Sigmoid colon (tissue), 7 donors: ENCODE measurements at regions of chr2 and their contacts with region 1.

Region 1: GRCh38 chr2:37231241-37232130 is at the starts of genes CEBPZ and NDUFAF7:
- DNase-seq: peak; percentile 96
- H3K4me3 ChIP-seq: peak within 1 kb of the TSS; percentile 69 to 96 (median 82)
- H3K27ac ChIP-seq: peak within 1 kb of the TSS; percentile 93 to 98 (median 95)
- H3K4me1 ChIP-seq: peaks cover 0 to 62% (median 52%) of the 10 kb centered on the region in 4 donors
- H3K27me3 ChIP-seq: no peaks in the 10 kb centered on the region
- CTCF ChIP-seq: no peak
- EP300 ChIP-seq: peak in 1 of 4 donors; percentile 17
- POLR2A ChIP-seq: peak; percentile 81 to 91
- total RNA-seq, gene CEBPZ: 38.8 to 54.2 (median 42.8) TPM
- total RNA-seq, gene NDUFAF7: 26.7 to 35.0 (median 28.3) TPM

Region 2: DNA sequence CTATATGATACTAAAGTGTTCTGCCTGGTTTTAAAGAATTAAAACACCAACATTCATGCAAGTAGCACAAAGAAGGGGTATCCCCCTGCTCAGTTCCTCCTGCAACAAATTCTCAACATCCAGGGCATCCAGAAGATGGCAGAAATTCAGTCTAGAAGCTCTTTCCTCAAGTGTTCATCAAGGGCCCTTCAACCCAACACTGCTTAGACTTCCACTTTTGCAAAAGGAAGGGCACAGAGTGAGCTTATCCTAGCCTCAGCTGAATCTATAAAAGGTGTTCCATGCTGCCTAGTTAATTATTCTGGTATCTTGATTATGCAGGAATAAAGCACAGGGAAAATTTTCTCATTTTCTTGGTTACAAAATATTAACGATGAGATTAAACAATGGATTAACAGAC is 1151.7 kb before region 1 on chr2:
- intact Hi-C with region 1: no loop called
- DNase-seq: no peak
- H3K4me3 ChIP-seq: no peak overlapping the region
- H3K27ac ChIP-seq: no peak overlapping the region
- H3K4me1 ChIP-seq: no peaks in the 10 kb centered on the region
- H3K27me3 ChIP-seq: no peaks in the 10 kb centered on the region
- CTCF ChIP-seq: no peak
- EP300 ChIP-seq: no peak
- POLR2A ChIP-seq: no peak

Region 3: GRCh38 chr2:37083873-37084794 is 147.4 kb before region 1 on chr2 and contains the starts of genes GPATCH11 and HEATR5B:
- intact Hi-C with region 1: loop called (anchors 10 kb)
- DNase-seq: peak; percentile 97
- H3K4me3 ChIP-seq: peak within 1 kb of the TSS; percentile 68 to 92 (median 84)
- H3K27ac ChIP-seq: peak within 1 kb of the TSS; percentile 80 to 83 (median 82)
- H3K4me1 ChIP-seq: peaks cover 0 to 25% (median 20%) of the 10 kb centered on the region in 4 donors
- H3K27me3 ChIP-seq: no peaks in the 10 kb centered on the region
- CTCF ChIP-seq: no peak
- EP300 ChIP-seq: no peak
- POLR2A ChIP-seq: peak in 1 of 2 donors; percentile 52
- total RNA-seq, gene GPATCH11: 4.7 to 11.8 (median 7.8) TPM
- total RNA-seq, gene HEATR5B: 16.6 to 24.7 (median 22.2) TPM

Region 4: GRCh38 chr2:37142546-37142945 is 88.9 kb before region 1 on chr2:
- intact Hi-C with region 1: no loop called
- DNase-seq: no peak
- H3K4me3 ChIP-seq: no peak overlapping the region
- H3K27ac ChIP-seq: no peak overlapping the region
- H3K4me1 ChIP-seq: no peaks in the 10 kb centered on the region
- H3K27me3 ChIP-seq: no peaks in the 10 kb centered on the region
- CTCF ChIP-seq: no peak
- EP300 ChIP-seq: no peak
- POLR2A ChIP-seq: no peak

Region 5: DNA sequence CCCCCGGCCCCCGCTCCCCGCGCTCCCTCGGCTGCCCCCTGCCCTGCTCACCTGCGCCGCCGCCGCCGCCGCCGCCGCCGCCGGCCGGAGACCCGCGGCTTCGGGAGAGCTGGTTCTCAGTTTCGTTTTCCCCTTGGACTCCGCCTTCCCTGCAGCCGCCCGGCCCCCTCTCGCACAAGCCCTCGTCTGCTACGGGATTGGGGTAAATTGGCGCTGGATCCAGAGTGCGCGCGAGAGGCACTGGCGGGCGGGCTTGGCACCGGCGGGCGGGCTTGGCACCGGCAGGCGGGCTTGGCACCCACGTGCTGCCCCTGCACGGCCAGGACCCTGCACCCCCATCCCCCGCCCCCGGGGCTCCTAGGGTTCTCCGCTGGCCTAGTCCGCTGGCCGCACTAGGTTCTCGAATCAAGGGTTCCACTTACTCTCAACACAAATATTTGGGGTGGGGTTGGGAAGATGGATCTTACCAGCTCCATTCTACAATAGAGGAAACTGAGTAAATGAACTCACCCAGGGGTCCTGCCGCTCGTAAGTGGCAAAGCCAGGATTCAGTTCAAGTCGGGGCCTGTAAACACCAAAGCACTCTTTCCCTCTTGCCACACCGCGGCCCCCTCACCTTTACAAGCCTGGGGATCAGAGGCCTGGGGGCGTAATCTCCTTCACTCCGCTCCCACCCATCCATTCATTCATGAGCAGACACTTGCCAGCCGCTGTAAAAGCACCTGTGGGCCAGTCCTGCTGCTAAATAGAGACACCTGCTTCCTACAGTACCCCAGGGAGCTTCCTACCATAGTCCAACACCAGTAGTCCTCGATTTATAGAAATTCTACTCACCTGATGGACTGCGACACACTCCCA is 74.4 kb before region 1 on chr2 and contains the start of gene EIF2AK2:
- intact Hi-C with region 1: loop called (anchors 5 kb)
- DNase-seq: peak; percentile 94
- H3K4me3 ChIP-seq: peak within 1 kb of the TSS; percentile 86 to 99 (median 94)
- H3K27ac ChIP-seq: peak within 1 kb of the TSS; percentile 88 to 96 (median 92)
- H3K4me1 ChIP-seq: peaks cover 0 to 21% (median 16%) of the 10 kb centered on the region in 4 donors
- H3K27me3 ChIP-seq: no peaks in the 10 kb centered on the region
- CTCF ChIP-seq: no peak
- EP300 ChIP-seq: no peak
- POLR2A ChIP-seq: no peak
- total RNA-seq, gene EIF2AK2: 26.9 to 38.5 (median 34.2) TPM

Region 6: DNA sequence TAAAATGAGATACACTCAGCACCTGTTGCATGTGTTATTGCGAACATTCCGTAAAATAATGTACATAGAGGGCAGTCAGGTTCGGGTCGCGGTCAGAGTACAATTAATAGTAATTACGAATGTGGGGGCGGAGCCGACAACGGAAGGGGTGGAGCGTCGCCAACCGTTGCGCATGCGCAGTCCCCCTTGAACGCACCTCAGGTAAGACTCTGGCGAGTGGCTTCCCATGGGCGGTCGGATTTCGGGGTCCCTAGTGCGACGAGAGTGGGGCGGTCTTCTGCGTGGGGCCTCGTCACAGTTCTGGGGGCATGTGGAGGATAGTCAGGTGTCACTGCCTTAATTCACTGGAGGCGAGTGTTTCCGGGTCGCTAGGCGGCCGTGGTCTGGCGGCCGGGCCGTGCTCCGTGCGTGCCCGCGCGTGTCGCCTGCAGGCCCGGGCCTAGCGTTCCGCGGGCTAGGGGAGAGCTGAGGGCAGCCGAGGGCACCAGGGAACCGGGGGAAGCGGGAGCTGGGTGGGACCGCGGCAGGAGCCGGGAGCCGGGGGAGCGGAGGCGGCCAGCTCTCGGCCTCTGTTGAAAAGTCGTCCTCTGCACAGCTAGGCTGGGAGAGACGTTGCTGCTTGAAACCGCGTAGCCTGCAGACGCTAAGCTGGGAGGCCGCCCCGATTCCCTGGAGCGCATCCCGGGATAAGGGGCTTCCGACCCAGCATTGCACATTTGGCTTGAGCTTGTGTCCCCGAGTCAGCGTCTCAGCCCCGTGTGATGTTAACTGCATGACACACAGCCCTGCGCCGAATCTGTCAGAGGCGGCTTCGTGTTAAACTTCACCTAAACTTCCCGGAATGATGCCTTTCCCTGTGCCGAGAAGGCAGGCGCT is 34.9 kb before region 1 on chr2 and contains the start of gene CEBPZOS:
- intact Hi-C with region 1: loop called (anchors 2 kb)
- DNase-seq: peak; percentile 90
- H3K4me3 ChIP-seq: peak within 1 kb of the TSS; percentile 81 to 91 (median 84)
- H3K27ac ChIP-seq: peak within 1 kb of the TSS; percentile 89 to 94 (median 91)
- H3K4me1 ChIP-seq: peaks cover 0 to 15% (median 12%) of the 10 kb centered on the region in 4 donors
- H3K27me3 ChIP-seq: no peaks in the 10 kb centered on the region
- CTCF ChIP-seq: no peak
- EP300 ChIP-seq: no peak
- POLR2A ChIP-seq: peak; percentile 64 to 77
- total RNA-seq, gene CEBPZOS: 23.0 to 42.2 (median 38.1) TPM

Region 7: GRCh38 chr2:37324786-37325624 is 93.5 kb after region 1 on chr2 and contains the start of gene PRKD3:
- intact Hi-C with region 1: loop called (anchors 1 kb)
- DNase-seq: peak; percentile 80
- H3K4me3 ChIP-seq: peak within 1 kb of the TSS; percentile 66 to 98 (median 86)
- H3K27ac ChIP-seq: peak within 1 kb of the TSS; percentile 86 to 96 (median 95)
- H3K4me1 ChIP-seq: peaks cover 0 to 46% (median 36%) of the 10 kb centered on the region in 4 donors
- H3K27me3 ChIP-seq: no peaks in the 10 kb centered on the region
- CTCF ChIP-seq: no peak
- EP300 ChIP-seq: no peak
- POLR2A ChIP-seq: peak; percentile 12 to 31
- total RNA-seq, gene PRKD3: 53.9 to 78.8 (median 71.9) TPM

Region 8: DNA sequence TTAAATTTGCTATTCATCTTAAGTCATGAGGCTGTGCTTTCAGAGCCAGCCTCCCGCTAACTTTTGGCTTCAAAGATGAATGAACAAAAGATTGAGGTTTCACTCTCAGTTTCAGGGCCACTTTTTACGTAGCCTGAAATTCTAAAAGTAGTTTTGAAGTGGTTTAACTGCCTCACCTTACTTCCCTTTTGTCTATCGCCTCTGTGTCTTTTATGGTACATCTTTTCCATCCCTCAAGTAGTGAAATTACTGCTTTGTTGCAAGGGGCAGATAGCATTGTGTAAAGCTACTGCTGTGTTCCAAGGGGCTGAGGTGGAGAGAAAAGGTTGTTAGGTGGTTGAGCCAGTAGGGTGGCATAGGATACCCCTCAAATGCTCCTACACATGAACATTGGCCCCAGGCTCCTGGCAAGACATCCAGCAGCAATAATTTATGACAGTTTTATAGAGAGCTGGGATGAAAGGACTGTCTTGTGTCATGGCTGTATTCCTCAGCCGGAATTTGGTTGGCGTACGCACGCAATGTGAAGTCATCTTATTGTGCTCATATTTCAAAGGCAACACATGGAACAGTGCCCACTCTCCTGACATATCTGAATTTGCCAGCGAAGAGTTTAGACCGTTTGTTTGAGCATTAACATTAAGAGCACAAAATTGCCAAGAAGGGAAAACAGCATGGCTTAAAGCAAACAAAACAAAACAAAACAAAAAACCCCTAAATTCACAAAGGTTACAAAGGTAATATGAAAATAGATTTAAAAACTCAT is 145.1 kb after region 1 on chr2:
- intact Hi-C with region 1: loop called (anchors 2 kb)
- DNase-seq: peak; percentile 95
- H3K4me3 ChIP-seq: peak overlapping the region in 3 of 4 donors; percentile 1 to 15 (median 11)
- H3K27ac ChIP-seq: peak overlapping the region; percentile 53 to 87 (median 78)
- H3K4me1 ChIP-seq: peaks cover 0 to 65% (median 53%) of the 10 kb centered on the region in 4 donors
- H3K27me3 ChIP-seq: no peaks in the 10 kb centered on the region
- CTCF ChIP-seq: no peak
- EP300 ChIP-seq: peak; percentile 85 to 98 (median 96)
- POLR2A ChIP-seq: no peak

Region 9: DNA sequence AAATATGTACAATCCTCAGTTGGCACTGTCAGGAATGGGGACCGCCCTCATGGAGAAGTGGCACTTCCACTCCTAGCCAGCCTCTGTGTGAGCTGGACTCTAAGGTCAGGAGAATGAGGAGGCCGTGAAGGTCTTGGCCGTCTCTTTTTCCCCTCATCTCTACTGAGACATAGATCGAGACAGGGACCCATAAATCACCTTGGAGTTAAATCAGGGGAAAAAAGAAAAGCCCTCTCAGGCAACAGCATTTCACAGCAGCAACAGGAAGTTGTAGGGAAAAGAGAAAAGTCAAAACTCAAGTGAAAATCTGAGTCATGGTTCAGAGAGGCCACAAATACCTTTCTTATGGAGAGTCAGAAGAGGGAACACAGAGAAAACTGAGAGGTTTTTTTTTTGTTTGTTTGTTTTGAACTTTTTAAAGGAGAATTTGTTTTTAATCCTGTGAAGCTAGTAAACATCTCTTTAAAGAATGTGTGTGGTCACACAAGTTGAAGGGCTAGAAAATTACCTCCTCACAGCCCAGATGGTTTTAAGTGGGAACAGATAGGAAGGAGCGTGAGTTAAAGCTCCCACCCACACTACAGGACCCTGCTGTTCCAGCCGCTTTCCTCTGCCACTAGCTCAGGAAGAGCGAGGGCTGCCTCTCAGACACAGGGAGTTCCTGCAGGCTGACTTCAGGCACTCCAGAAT is 875.1 kb after region 1 on chr2:
- intact Hi-C with region 1: no loop called
- DNase-seq: no peak
- H3K4me3 ChIP-seq: no peak overlapping the region
- H3K27ac ChIP-seq: peak overlapping the region; percentile 1 to 31 (median 22)
- H3K4me1 ChIP-seq: peaks cover 0 to 21% (median 9%) of the 10 kb centered on the region in 4 donors
- H3K27me3 ChIP-seq: no peaks in the 10 kb centered on the region
- CTCF ChIP-seq: no peak
- EP300 ChIP-seq: no peak
- POLR2A ChIP-seq: no peak